IMR-90 (cell line): ENCODE measurements at regions of chr11 and their contacts with region 1.

Region 1: GRCh38 chr11:74138572-74138971 is 32.2 kb downstream of the C2CD3 start:
- DNase-seq: peak; percentile 99
- ATAC-seq: peak; percentile 84
- H3K4me3 ChIP-seq: no peak overlapping the region
- H3K27ac ChIP-seq: peak overlapping the region; percentile 5; the same call in 1 of the 2 replicates
- H3K4me1 ChIP-seq: peaks cover 32% of the 10 kb centered on the region
- H3K27me3 ChIP-seq: no peaks in the 10 kb centered on the region
- CTCF ChIP-seq: no peak
- POLR2A ChIP-seq: peak; percentile 49; the same call in 1 of the 2 replicates
- RAD21 ChIP-seq: no peak

Region 2: DNA sequence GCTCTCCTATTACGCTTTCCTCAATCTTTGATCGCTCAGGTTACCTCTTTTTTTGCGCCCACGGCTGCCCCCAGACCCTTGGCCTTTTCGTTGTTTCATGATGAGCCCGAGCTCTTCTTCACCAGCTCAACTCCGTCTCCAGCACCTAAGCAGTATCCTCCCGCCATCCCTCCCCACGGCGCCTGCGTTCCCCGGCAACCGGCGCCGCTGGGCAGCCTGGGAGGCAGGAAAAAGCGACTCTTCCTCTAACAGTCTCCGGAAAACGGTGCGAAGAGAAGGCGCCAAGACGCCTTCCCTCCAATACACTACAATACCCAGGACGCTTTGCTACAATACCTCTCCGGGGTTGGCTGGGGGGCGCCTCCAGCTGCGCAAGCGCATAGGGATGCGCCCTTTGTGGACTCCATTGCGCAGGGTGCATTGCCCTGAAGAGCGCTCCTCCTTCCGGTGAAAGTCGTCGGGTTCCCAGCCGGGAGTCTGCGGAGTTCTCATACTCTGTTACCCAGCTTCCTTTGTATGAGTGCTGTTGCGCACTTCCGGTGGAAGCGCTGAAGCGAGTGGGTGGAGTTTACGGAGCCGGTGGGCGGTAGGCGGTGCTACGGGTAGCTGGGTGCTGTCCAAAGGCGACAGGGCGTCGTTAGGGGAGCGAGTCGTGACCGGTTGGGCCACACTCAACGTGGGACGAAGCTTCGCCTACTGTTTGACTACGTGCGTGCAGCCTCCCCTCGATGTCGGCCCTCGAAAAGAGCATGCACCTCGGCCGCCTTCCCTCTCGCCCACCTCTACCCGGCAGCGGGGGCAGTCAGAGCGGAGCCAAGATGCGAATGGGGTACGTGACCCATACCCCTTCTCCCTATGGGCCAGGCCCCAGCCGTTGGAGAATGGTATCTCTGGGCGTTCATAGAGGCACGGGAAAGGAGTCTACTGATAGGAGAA is 32.4 kb after region 1 on chr11 and contains the starts of genes C2CD3 and PPME1:
- CTCF ChIA-PET with region 1: interaction called, 3 read pairs
- POLR2A ChIA-PET with region 1: no interaction called
- dilution Hi-C with region 1: no loop called
- in situ Hi-C with region 1: no loop called
- intact Hi-C with region 1: loop called (anchors 5 kb)
- DNase-seq: peak; percentile 100
- ATAC-seq: peak; percentile 97
- H3K4me3 ChIP-seq: peak within 1 kb of the TSS; percentile 70
- H3K27ac ChIP-seq: peak within 1 kb of the TSS; percentile 87
- H3K4me1 ChIP-seq: peaks cover 7% of the 10 kb centered on the region
- H3K27me3 ChIP-seq: no peaks in the 10 kb centered on the region
- CTCF ChIP-seq: peak; percentile 48
- POLR2A ChIP-seq: peak; percentile 90
- RAD21 ChIP-seq: peak; percentile 42
- total RNA-seq, gene C2CD3: 15.0 and 19.2 TPM in 2 replicates
- total RNA-seq, gene PPME1: 38.9 and 42.3 TPM in 2 replicates

Region 3: GRCh38 chr11:74311352-74311926 is 172.9 kb after region 1 on chr11 and contains the start of gene P4HA3:
- CTCF ChIA-PET with region 1: no interaction called
- POLR2A ChIA-PET with region 1: no interaction called
- dilution Hi-C with region 1: no loop called
- in situ Hi-C with region 1: no loop called
- intact Hi-C with region 1: no loop called
- DNase-seq: peak; percentile 28
- ATAC-seq: peak; percentile 99
- H3K4me3 ChIP-seq: peak within 1 kb of the TSS; percentile 73
- H3K27ac ChIP-seq: peak within 1 kb of the TSS; percentile 18; the same call in 1 of the 2 replicates
- H3K4me1 ChIP-seq: peaks cover 11% of the 10 kb centered on the region
- H3K27me3 ChIP-seq: no peaks in the 10 kb centered on the region
- CTCF ChIP-seq: peak; percentile 23; the same call in 1 of the 2 replicates
- POLR2A ChIP-seq: no peak
- RAD21 ChIP-seq: 0 out of 2 replicates have a peak, but pooled peaks have one; percentile 11
- total RNA-seq, gene P4HA3: 2.8 and 2.9 TPM in 2 replicates

Region 4: GRCh38 chr11:74720596-74721478 is 582.3 kb after region 1 on chr11:
- CTCF ChIA-PET with region 1: no interaction called
- POLR2A ChIA-PET with region 1: no interaction called
- dilution Hi-C with region 1: no loop called
- in situ Hi-C with region 1: no loop called
- intact Hi-C with region 1: loop called (anchors 5 kb)
- DNase-seq: peak; percentile 89
- ATAC-seq: peak; percentile 78
- H3K4me3 ChIP-seq: no peak overlapping the region
- H3K27ac ChIP-seq: peak overlapping the region; percentile 92
- H3K4me1 ChIP-seq: peaks cover 51% of the 10 kb centered on the region
- H3K27me3 ChIP-seq: no peaks in the 10 kb centered on the region
- CTCF ChIP-seq: no peak
- POLR2A ChIP-seq: no peak
- RAD21 ChIP-seq: no peak